HepG2 (cell line): ENCODE measurements at regions of chr7 and their contacts with region 1.

Region 1: GRCh38 chr7:50714839-50715238 is 67.9 kb downstream of the GRB10 start:
- DNase-seq: no peak
- ATAC-seq: no peak
- H3K4me3 ChIP-seq: no peak overlapping the region
- H3K27ac ChIP-seq: no peak overlapping the region
- H3K4me1 ChIP-seq: peaks cover 21% of the 10 kb centered on the region
- H3K27me3 ChIP-seq: no peaks in the 10 kb centered on the region
- CTCF ChIP-seq: no peak
- EP300 ChIP-seq: no peak
- POLR2A ChIP-seq: no peak
- RAD21 ChIP-seq: no peak

Region 2: DNA sequence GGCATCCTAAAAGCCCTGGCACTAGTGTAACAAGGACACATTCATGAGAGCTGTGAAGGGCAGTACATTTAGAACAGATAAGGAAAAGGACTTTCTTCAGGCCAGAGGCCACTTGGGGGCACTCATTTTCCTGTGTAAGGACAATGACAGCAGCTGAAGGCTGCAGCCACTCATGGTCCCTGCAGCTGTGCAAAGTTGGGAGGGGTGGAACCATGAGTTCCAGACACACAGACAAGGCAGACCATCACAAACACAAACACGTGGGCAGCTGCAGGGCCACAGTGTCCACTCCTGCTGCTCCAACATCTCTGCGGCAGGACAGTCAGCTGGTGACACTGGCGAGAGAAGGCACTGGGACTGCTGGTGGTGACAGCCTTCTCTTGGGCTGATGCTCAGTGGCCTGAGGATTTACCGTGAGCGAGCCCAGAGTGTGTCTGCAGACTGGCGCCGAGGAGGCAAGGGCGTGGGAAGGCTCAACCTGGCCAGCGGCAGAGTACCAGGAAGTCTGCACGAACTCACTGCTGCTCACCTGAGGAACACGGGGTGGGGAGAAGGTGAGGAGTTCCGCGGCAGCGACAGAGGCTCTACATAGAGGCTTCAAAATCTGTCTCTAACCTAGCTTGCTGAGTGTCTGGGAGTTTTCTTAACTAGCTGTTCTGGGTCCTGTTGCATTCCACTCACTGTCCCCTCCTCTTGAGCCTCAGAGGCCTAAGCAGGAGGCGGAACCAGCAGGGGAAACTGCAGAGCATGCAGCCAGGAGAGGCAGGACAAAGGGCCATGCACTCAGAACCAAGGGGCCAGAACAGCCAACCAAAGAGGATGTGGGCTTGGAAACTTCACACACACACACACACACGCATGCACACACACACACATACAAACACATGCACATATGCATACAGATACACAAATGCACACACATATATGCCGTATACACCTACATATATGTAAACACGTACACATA is 73.1 kb before region 1 on chr7:
- CTCF ChIA-PET with region 1: no interaction called
- POLR2A ChIA-PET with region 1: no interaction called
- in situ Hi-C with region 1: no loop called
- intact Hi-C with region 1: no loop called
- DNase-seq: peak; percentile 18
- ATAC-seq: peak; percentile 86
- H3K4me3 ChIP-seq: no peak overlapping the region
- H3K27ac ChIP-seq: no peak overlapping the region
- H3K4me1 ChIP-seq: peaks cover 16% of the 10 kb centered on the region
- H3K27me3 ChIP-seq: no peaks in the 10 kb centered on the region
- CTCF ChIP-seq: peak; percentile 66
- EP300 ChIP-seq: no peak
- POLR2A ChIP-seq: no peak
- RAD21 ChIP-seq: no peak

Region 3: GRCh38 chr7:50739744-50740435 is 25.1 kb after region 1 on chr7:
- CTCF ChIA-PET with region 1: no interaction called
- POLR2A ChIA-PET with region 1: no interaction called
- in situ Hi-C with region 1: no loop called
- intact Hi-C with region 1: loop called (anchors 2 kb)
- DNase-seq: no peak
- ATAC-seq: no peak
- H3K4me3 ChIP-seq: no peak overlapping the region
- H3K27ac ChIP-seq: no peak overlapping the region
- H3K4me1 ChIP-seq: peaks cover 23% of the 10 kb centered on the region
- H3K27me3 ChIP-seq: no peaks in the 10 kb centered on the region
- CTCF ChIP-seq: no peak
- EP300 ChIP-seq: no peak
- POLR2A ChIP-seq: no peak
- RAD21 ChIP-seq: no peak

Region 4: DNA sequence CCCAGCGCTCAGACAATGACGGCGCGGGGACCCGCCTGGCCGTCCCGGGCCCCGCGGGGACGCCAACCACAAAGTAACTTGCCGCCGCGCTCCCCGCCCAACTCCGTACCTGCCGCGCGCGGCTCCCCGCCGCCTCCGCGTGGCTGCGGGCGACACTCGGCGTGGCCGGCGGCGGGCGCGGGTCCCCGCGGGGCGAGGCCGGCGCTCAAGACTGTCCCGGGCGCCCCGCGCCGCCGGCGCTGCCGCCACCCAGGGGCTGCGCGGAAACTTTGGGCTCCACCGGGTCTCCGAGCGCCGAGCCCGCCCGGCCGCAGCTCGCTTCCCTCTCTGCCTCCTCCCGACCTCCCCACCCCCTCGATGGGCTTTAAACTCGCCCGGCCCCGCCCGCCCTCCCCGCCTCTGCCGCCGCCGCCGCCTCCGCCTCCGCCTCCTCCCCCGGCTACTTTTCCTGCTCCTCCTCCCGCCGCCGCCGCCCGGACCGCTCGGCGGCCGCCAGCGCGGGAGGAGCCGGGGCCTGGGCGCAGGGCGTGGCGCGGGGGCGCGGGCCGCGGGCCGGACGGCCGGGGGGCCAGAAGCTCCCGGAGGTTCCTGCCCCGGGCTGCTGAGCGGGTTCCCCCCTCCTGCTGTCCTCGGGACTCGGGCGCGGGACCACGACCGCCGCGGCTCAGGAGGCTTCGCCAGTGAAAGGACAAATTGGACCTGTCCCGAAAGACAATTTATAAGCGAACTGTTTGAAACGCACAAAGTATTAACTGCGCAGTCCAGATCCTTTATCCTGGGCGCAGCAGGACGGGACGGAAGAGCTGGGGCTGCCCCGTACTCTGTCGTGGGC is 78.5 kb after region 1 on chr7:
- CTCF ChIA-PET with region 1: no interaction called
- POLR2A ChIA-PET with region 1: no interaction called
- in situ Hi-C with region 1: no loop called
- intact Hi-C with region 1: loop called (anchors 5 kb)
- DNase-seq: no peak
- ATAC-seq: peak; percentile 59
- H3K4me3 ChIP-seq: peak overlapping the region; percentile 38 to 70 (median 45); a peak in 5 of 6 replicates
- H3K27ac ChIP-seq: no peak overlapping the region
- H3K4me1 ChIP-seq: peaks cover 18% of the 10 kb centered on the region
- H3K27me3 ChIP-seq: peaks cover 2 to 30% of the 10 kb centered on the region in 2 experiments; a peak in 4 of 5 replicates
- CTCF ChIP-seq: no peak
- EP300 ChIP-seq: no peak
- POLR2A ChIP-seq: no peak
- RAD21 ChIP-seq: no peak